ENCODE measurements at regions of chr18 and their contacts with region 1.

Region 1: DNA sequence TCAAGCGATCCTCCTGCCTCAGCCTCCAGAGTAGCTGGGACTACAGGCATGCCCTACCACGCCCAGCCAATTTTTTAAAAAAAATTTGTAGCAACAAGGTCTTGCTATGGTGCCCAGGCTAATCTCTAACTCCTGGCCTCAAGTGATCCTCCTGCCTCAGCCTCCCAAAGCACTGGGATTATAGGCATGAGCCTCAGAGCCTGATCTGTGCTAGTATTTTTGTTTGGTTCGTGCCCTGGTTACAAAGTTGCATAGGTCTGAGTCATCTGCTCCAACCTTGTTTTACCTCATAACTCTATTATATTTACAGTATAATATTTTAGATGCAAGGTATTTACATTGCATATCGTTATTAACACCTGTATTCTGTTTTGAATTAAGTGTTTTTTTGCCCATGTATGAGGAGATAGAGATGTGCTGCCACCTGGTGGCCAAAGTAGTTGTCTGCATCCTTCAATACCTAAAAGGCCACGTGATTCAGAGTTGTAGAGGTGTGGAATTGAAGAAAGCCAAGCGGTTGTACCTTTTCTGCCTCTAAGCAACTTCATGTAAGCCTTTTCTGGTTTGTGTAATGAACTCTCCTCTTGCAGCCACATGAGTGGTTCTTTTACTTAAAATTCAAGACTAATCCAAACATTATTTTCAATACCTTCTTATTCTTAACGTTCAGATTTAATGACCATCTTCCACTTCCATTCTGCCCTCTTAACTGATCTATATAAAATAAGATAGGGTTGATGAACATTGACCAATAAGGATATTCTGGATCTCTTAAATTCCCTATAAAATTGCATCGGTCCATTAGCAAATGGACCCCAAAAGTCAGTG is 19.9 kb upstream of the CABYR start:
- DNase-seq: peak; percentile 66
- CTCF ChIP-seq: peak; percentile 75

Region 2: DNA sequence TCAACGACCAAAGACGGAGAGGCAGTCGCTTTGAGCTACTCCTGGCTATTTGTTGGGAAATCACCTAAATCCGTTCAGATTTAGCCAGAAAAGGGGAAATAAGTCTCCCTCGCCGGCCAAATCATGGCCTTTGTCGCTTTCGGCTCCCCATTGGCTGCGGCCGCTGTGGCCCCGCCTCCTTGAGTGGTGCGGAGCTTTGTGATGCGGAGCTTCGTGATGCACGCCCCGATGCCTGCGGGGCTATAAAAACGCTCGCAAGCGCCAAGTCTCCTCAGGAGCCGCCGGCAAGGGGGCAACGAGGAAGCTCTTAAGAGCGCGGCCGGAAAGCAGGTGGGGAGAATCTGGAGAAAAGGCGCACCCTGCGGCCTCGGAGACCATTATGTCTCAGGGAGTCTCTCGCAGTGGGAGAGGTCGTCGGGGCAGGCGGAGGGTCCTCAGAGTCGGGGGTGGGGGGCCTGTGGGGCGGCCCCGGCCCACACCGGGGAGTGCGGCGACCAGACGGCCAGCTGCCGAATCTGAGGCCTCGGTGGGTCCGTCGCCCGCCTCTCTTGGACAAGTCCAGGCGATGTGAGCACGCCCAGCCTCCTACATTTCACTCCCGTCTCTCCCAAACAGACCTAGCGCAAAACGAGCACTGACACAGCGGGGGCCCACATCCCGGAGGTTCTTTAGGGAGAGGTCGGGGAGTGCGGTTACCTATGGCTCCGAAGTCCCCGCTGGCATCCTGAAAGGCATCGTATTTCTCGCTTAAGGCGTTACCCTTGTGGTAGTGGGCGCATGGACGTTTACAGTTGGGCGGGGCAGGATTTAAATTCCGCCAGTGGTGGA is 20.0 kb after region 1 on chr18 and contains the start of gene CABYR:
- CTCF ChIA-PET with region 1: interaction called, 10 read pairs
- POLR2A ChIA-PET with region 1: interaction called, 3 read pairs
- DNase-seq: peak; percentile 77
- CTCF ChIP-seq: no peak

Region 3: GRCh38 chr18:24208270-24209035 is 89.5 kb after region 1 on chr18:
- CTCF ChIA-PET with region 1: no interaction called
- POLR2A ChIA-PET with region 1: no interaction called
- DNase-seq: no peak
- CTCF ChIP-seq: no peak

Region 4: DNA sequence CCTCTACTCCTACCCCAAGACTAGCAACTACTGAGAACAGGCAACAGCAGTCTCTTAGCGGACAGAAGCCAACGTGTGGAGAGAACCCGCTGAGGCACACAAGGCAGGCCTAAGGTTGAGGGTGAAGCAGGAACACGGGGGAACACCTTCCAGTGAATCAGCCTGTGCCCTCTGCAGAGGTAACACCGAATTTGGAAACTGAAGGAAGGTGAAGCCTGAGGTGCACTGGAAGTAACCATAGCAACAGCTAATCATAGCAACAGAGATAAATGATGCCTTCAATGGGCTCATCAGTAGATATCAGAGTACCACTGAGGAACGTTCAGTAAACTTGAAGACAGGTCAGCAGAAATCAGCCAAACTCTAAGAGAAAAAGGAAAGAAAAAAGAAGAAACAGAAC is 235.3 kb after region 1 on chr18:
- CTCF ChIA-PET with region 1: no interaction called
- POLR2A ChIA-PET with region 1: no interaction called
- DNase-seq: no peak
- CTCF ChIP-seq: no peak

Measured in GM10248 (cell line).